AG04449 (cell line): ENCODE measurements at regions of chr10 and their contacts with region 1.

Region 1: GRCh38 chr10:52215745-52216361 is 98.2 kb upstream of the DKK1 start:
- DNase-seq: peak; percentile 37
- H3K4me3 ChIP-seq: no peak overlapping the region
- CTCF ChIP-seq: peak; percentile 45

Region 2: GRCh38 chr10:51001587-51001986 is 1214.3 kb before region 1 on chr10:
- CTCF ChIA-PET with region 1: interaction called, 16 read pairs
- POLR2A ChIA-PET with region 1: no interaction called
- DNase-seq: no peak
- H3K4me3 ChIP-seq: no peak overlapping the region
- CTCF ChIP-seq: peak; percentile 34

Region 3: GRCh38 chr10:51007781-51008180 is 1208.1 kb before region 1 on chr10:
- CTCF ChIA-PET with region 1: interaction called, 10 read pairs
- POLR2A ChIA-PET with region 1: no interaction called
- DNase-seq: no peak
- H3K4me3 ChIP-seq: no peak overlapping the region
- CTCF ChIP-seq: no peak

Region 4: DNA sequence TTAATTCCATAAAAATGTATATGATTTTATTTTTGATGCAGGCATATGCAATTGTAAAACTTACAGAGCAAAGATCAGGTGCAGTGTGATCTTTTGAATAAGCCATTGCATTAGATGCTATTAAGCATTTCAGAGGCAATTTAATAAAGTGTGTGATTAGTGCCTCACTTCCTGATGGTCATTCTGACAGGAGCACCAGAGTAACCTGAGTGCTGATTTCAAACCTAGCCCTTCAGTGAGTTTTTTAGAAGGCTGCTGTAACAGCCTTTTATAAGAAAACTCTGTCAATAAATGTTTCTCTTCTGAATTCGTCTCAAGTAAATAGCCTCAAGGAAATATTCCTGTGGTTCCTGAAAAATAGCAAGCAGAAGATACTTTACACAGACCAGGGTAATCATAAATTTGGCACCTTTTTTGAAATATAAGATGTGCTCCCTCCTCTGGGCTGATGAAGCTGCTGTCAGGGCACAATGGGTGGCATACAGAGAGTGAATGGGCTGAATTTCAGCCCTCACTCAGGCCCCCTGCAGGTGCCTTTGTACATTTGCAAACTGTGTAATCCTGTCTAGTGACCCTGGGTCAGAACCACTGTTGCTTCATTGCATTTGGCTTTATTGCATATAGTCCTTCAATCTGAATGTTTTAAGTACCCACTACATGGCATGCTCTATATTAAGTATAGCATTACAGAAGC is 322.7 kb before region 1 on chr10:
- CTCF ChIA-PET with region 1: no interaction called
- POLR2A ChIA-PET with region 1: no interaction called
- DNase-seq: no peak
- H3K4me3 ChIP-seq: no peak overlapping the region
- CTCF ChIP-seq: no peak

Region 5: GRCh38 chr10:52100011-52100547 is 115.8 kb before region 1 on chr10:
- CTCF ChIA-PET with region 1: no interaction called
- POLR2A ChIA-PET with region 1: no interaction called
- DNase-seq: no peak
- H3K4me3 ChIP-seq: no peak overlapping the region
- CTCF ChIP-seq: no peak

Region 6: DNA sequence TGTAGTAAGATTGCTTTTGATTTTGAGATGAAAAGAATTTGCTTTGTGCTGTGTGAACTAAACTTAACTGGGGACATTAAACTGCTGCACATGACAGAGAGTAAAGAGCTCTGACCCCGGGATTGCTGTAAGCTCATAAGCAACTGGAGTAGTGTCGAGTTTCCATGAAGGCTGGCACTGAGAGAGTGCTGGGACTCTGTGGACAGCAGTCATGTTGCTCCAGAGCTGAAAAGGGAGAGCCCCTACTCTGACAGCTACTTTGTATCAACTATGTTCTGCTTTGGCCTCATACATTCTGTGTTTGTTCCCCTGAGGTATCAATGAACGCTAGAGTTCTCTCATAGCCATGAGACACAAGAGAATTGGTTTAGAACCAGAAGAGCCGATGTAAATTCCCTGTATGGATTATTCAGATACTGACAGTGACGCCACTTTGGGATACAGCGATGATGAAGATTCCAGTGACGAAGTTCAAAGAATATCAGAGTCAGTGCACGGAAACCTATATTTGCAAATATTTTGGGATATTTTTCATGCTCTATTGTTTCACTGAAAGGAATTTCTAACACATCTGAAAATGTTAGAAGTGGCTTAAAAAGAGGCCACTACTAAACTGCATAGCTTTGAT is 87.7 kb before region 1 on chr10:
- CTCF ChIA-PET with region 1: no interaction called
- POLR2A ChIA-PET with region 1: no interaction called
- DNase-seq: no peak
- H3K4me3 ChIP-seq: no peak overlapping the region
- CTCF ChIP-seq: no peak

Region 7: GRCh38 chr10:52194191-52194590 is 21.7 kb before region 1 on chr10:
- CTCF ChIA-PET with region 1: interaction called, 10 read pairs
- POLR2A ChIA-PET with region 1: no interaction called
- DNase-seq: no peak
- H3K4me3 ChIP-seq: no peak overlapping the region
- CTCF ChIP-seq: no peak